G401 (cell line): ENCODE measurements at regions of chr18 and their contacts with region 1.

Region 1: DNA sequence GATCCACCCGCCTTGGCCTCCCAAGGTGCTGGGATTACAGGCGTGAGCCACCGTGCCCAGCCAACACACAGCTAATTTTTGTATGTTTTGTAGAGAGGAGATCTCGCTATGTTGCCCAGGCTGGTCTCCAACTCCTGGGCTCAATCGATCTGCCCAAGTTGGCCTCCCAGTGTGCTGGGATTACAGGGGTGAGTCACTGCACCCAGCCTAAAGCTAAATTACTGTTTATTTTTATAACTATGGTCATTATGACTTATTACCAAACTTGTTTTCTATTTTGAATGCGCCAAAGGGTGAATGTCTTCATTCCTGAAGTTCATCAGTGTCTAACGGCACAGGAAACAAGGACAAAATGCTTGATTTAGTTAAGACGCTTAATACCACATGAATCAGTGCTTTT is 38.9 kb upstream of the GREB1L start:
- DNase-seq: no peak

Region 2: GRCh38 chr18:21129566-21130216 is 73.4 kb before region 1 on chr18:
- in situ Hi-C with region 1: no loop called
- DNase-seq: no peak

Region 3: GRCh38 chr18:21155443-21155842 is 47.7 kb before region 1 on chr18:
- in situ Hi-C with region 1: no loop called
- DNase-seq: no peak

Region 4: DNA sequence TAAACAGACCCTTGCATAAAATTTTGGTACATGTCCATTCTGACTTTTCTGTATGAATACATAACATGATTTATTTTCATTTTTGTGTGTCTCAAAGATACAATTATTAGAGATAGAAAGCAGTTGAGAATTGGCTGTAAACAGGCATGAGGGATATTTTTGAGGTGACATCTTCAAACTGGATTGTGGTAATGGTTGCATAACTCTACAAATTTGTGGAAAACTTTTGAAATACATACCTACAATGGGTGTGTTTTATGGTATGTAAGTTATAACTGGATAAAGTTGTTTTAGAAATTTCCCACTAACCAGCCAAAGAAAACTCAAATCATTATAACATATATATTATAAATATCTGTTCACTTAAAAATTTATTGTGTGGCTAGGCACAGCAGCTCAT is 78.5 kb after region 1 on chr18:
- in situ Hi-C with region 1: loop called (anchors 10 kb)
- DNase-seq: no peak

Region 5: DNA sequence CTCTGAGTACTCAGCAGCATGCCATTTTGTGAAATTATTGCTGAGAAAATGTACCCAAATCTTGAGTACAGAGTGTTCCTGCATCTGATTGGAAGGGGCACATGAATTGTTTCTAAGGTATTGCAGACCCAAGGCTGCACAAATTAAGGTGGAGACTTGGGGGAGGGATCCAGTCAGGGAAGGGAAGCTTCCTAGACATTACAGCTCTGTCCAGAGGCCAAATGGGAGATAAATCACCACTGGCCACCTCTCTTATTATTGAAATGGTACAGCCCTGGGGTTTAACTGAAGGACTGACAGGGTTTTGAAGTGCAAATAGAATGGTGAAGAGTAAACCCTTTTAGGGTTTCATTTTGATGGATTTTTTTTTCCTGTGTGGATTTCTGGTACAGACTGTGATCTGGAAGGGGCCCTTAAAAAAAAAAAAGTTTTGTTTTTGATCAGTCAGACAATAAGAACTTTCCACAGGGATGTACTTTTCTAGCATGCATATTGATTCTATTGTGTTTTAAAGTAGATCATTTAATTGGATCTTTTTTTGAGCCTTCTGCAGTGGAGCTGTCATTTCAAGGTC is 158.3 kb after region 1 on chr18:
- in situ Hi-C with region 1: loop called (anchors 10 kb)
- DNase-seq: no peak